Activated CD4-positive, alpha-beta memory T cell treated with anti-CD3 and anti-CD28 coated beads, Interleukin-2, amount 10 ng/mL, durations not matched to agents 7 days and 5 days (primary cell): ENCODE measurements at regions of chr1 and their contacts with region 1.

Region 1: DNA sequence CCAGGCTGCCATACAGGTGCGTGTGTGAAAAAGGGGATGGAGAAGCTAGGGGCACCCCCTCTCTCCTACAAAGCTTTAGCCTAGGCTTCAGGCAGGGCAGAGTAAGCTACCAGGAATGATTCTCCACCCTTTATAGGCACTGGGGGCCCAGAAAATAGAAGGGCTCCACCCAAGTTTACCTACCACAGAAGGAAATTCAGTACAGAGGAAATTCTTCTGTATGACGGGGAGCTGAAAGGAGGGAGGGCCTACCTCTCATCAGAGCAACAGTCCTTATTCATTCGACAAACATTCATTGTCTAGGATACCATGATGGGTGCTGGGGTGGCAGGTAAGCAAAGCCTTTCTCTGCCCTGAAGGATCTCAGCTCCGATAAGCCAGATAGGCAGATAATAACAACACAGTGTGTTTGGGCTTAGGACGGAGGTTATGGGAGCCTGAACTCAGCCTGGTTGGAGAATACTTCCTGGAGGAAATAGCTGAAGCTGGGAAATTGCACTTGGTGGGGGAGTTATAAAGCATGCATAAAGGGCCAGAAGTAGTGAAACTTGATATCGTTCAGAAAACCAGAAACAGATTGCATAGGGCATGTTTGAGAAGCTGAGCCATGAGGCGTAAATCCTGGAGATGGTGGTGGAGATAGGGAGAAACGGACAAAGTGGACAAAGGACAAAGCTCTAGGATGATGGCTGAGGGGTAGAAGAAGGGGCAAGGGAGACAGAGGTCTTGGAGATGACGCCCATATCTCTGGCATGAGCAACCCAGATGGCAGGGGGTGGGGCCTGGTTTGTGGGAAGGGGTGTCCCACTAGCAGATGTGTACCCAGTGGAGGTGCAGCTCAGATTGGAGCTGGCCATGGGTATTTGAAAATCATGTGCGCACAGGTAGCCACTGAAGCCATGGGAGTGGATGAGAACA is 5.3 kb upstream of the P3R3URF start:
- DNase-seq: no peak
- H3K4me3 Mint-ChIP-seq: no peak overlapping the region
- H3K27ac Mint-ChIP-seq: no peak overlapping the region
- H3K4me1 Mint-ChIP-seq: no peaks in the 10 kb centered on the region
- H3K27me3 Mint-ChIP-seq: no peaks in the 10 kb centered on the region

Region 2: GRCh38 chr1:46036894-46037839 is 144.4 kb before region 1 on chr1:
- CTCF ChIA-PET with region 1: interaction called, 10 read pairs
- POLR2A ChIA-PET with region 1: no interaction called
- DNase-seq: peak; percentile 84
- H3K4me3 Mint-ChIP-seq: no peak overlapping the region
- H3K27ac Mint-ChIP-seq: no peak overlapping the region
- H3K4me1 Mint-ChIP-seq: no peaks in the 10 kb centered on the region
- H3K27me3 Mint-ChIP-seq: no peaks in the 10 kb centered on the region

Region 3: GRCh38 chr1:46158312-46159281 is 23.0 kb before region 1 on chr1:
- CTCF ChIA-PET with region 1: no interaction called
- POLR2A ChIA-PET with region 1: no interaction called
- DNase-seq: no peak
- H3K4me3 Mint-ChIP-seq: no peak overlapping the region
- H3K27ac Mint-ChIP-seq: no peak overlapping the region
- H3K4me1 Mint-ChIP-seq: no peaks in the 10 kb centered on the region
- H3K27me3 Mint-ChIP-seq: peaks cover 8% of the 10 kb centered on the region

Region 4: DNA sequence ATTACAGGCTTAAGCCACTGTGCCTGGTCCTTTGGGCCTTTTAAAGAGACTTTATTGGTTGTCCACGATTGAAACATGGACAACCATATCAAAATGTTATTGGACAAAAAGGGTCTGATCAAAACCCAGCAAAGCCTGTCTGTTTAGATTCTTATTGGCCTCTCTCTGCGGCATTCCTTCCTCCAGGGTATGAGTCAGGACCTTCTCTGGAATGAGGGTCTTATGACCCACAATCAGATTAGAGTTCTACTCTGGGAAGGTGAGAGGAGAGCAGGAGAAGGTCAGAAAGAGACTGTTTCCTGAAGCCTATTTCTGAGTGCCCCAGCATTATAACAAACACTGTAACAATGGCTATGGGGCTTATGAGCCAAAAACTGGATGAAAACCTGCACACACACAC is 29.4 kb after region 1 on chr1:
- CTCF ChIA-PET with region 1: no interaction called
- POLR2A ChIA-PET with region 1: no interaction called
- DNase-seq: no peak
- H3K4me3 Mint-ChIP-seq: no peak overlapping the region
- H3K27ac Mint-ChIP-seq: no peak overlapping the region
- H3K4me1 Mint-ChIP-seq: no peaks in the 10 kb centered on the region
- H3K27me3 Mint-ChIP-seq: peaks cover 3% of the 10 kb centered on the region

Region 5: GRCh38 chr1:46289976-46290375 is 108.4 kb after region 1 on chr1:
- CTCF ChIA-PET with region 1: no interaction called
- POLR2A ChIA-PET with region 1: no interaction called
- DNase-seq: no peak
- H3K4me3 Mint-ChIP-seq: no peak overlapping the region
- H3K27ac Mint-ChIP-seq: no peak overlapping the region
- H3K4me1 Mint-ChIP-seq: peaks cover 12% of the 10 kb centered on the region
- H3K27me3 Mint-ChIP-seq: no peaks in the 10 kb centered on the region